Stomach (tissue), 19 donors: ENCODE measurements at regions of chr17 and their contacts with region 1.

Region 1: GRCh38 chr17:70144260-70144846 is 25.0 kb upstream of the KCNJ2 start:
- DNase-seq: peak in 1 of 2 donors; percentile 67
- H3K4me3 ChIP-seq: no peak overlapping the region
- H3K27ac ChIP-seq: no peak overlapping the region
- H3K4me1 ChIP-seq: peaks cover 0 to 17% (median 5%) of the 10 kb centered on the region in 4 donors
- H3K27me3 ChIP-seq: no peaks in the 10 kb centered on the region
- CTCF ChIP-seq: peak in 5 of 7 experiments; percentile 42 to 78 (median 61)
- EP300 ChIP-seq: no peak
- POLR2A ChIP-seq: no peak

Region 2: GRCh38 chr17:69607162-69607834 is 537.1 kb before region 1 on chr17:
- intact Hi-C with region 1: loop called (anchors 10 kb)
- DNase-seq: peak; percentile 78 to 85
- H3K4me3 ChIP-seq: no peak overlapping the region
- H3K27ac ChIP-seq: peak overlapping the region in 3 of 5 donors; percentile 40 to 63 (median 55)
- H3K4me1 ChIP-seq: peaks cover 0 to 40% (median 26%) of the 10 kb centered on the region in 4 donors
- H3K27me3 ChIP-seq: no peaks in the 10 kb centered on the region
- CTCF ChIP-seq: peak in 5 of 7 experiments; percentile 63 to 87 (median 67)
- EP300 ChIP-seq: no peak
- POLR2A ChIP-seq: no peak

Region 3: GRCh38 chr17:69743091-69743490 is 401.3 kb before region 1 on chr17:
- intact Hi-C with region 1: no loop called
- DNase-seq: no peak
- H3K4me3 ChIP-seq: no peak overlapping the region
- H3K27ac ChIP-seq: no peak overlapping the region
- H3K4me1 ChIP-seq: no peaks in the 10 kb centered on the region
- H3K27me3 ChIP-seq: no peaks in the 10 kb centered on the region
- CTCF ChIP-seq: no peak
- EP300 ChIP-seq: no peak
- POLR2A ChIP-seq: no peak

Region 4: DNA sequence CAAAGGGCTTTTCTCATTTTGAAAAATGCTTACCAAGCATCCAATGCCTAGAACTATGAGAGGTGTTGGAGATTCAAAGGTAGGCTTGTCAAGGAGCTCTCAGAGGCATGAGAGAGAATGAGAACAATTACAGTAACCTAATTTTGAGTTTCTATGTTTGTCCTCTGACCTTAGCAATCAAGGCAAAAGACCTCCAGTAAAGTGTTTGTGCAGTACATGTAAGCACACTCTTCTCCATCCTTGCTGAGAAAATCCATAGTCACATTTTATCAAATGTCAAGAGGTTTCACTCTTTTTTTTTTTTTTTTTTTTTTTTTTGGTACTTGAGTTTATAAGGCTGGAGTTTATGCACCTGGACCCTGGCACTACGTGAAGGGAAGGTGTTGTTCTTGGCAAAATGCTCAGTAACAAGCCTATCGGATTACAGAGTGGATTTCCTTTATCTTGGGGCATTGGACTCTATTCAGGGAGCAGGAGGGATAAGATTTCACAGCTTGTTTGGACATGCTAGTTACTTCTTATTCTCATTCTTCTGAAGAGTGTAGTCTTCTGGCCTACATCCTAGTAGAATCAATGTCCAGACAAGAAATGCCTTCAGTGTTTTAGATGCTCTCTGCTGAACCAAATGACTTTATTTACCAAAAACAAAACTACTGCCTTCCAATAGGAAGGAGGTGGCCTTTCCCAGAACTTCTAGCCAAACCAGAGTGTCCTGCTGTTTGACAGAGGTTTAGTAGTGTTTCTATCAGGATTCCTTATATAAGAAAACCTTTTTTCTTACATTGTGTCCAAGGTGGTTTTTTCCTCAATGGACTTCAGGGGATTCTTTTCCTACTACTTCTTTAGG is 46.8 kb after region 1 on chr17:
- intact Hi-C with region 1: no loop called
- DNase-seq: peak in 1 of 2 donors; percentile 36
- H3K4me3 ChIP-seq: no peak overlapping the region
- H3K27ac ChIP-seq: no peak overlapping the region
- H3K4me1 ChIP-seq: no peaks in the 10 kb centered on the region
- H3K27me3 ChIP-seq: no peaks in the 10 kb centered on the region
- CTCF ChIP-seq: no peak
- EP300 ChIP-seq: no peak
- POLR2A ChIP-seq: no peak